MCF 10A (cell line): ENCODE measurements at regions of chr5 and their contacts with region 1.

Region 1: GRCh38 chr5:178204182-178204894 is at the start of gene HNRNPAB:
- DNase-seq: peak; percentile 98
- H3K4me3 Mint-ChIP-seq: peak within 1 kb of the TSS; percentile 99
- H3K27ac Mint-ChIP-seq: peak within 1 kb of the TSS; percentile 99
- H3K4me1 Mint-ChIP-seq: peaks cover 50% of the 10 kb centered on the region
- H3K27me3 Mint-ChIP-seq: no peaks in the 10 kb centered on the region
- CTCF ChIP-seq: no peak
- total RNA-seq, gene HNRNPAB: 313 and 364 TPM in 2 replicates

Region 2: GRCh38 chr5:178146020-178146820 is 58.1 kb before region 1 on chr5:
- CTCF ChIA-PET with region 1: no interaction called
- POLR2A ChIA-PET with region 1: interaction called, 10 read pairs
- intact Hi-C with region 1: no loop called
- DNase-seq: peak; percentile 85
- H3K4me3 Mint-ChIP-seq: no peak overlapping the region
- H3K27ac Mint-ChIP-seq: peak overlapping the region; percentile 37
- H3K4me1 Mint-ChIP-seq: peaks cover 24% of the 10 kb centered on the region
- H3K27me3 Mint-ChIP-seq: no peaks in the 10 kb centered on the region
- CTCF ChIP-seq: peak; percentile 93

Region 3: DNA sequence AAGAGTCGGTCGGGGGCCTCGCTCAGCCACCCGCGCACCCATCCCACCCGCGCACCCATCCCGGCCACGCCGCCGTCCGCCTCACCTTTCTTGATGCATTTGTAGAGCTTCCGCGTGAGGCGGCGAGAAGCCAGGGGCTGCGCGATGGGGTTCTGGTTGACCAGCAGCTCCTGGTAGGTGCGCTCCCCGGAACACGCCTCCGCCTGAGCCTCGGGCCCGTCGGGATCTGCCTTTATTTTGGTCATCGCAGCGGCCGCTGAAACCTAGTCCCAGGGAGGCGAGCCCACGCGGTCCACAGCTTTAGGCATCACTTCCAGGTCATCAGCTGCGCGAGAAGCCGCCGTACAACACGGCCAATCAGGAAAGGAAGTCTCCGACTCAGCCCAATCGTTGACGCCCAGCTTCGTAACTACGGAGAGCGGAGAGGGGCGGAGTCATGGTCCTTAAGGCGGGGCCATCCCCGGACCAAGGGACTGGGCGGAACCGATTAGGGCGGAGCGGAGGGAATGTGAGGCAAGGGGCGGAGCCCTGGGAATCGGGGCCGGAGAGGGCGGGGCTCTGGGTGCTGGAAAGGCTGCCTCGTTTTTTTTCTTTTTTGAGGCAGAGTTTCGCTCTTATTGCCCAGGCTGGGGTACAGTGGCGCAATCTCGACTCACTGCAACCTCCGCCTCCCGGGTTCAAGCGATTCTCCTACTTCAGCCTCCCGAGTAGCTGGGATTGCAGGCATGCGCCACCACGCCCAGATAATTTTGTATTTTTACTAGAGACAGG is 50.6 kb before region 1 on chr5 and contains the start of gene NHP2:
- CTCF ChIA-PET with region 1: interaction called, 5 read pairs
- POLR2A ChIA-PET with region 1: interaction called, 14 read pairs
- intact Hi-C with region 1: no loop called
- DNase-seq: peak; percentile 100
- H3K4me3 Mint-ChIP-seq: peak within 1 kb of the TSS; percentile 98
- H3K27ac Mint-ChIP-seq: peak within 1 kb of the TSS; percentile 8
- H3K4me1 Mint-ChIP-seq: peaks cover 11% of the 10 kb centered on the region
- H3K27me3 Mint-ChIP-seq: no peaks in the 10 kb centered on the region
- CTCF ChIP-seq: no peak
- total RNA-seq, gene NHP2: 322 and 327 TPM in 2 replicates

Region 4: DNA sequence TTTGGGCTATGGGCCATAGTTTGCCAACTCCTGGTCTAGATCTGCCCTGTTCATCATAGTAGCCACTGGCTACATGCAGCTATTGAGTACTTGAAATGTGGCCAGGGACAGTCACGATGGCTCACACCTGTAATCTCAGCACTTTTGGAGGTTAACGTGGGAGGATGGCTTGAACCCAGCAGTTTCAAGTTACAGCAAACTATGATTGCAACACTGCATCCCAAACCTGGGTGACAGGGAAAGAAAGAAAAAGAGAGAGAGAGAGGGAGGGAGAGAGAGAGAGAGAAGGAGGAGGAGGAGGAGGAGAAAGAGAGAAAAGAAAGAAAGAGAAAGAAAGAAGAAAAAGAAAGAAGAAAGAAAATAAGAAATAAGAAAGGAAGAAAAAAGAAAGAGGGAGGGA is 12.1 kb before region 1 on chr5:
- CTCF ChIA-PET with region 1: interaction called, 5 read pairs
- POLR2A ChIA-PET with region 1: interaction called, 44 read pairs
- intact Hi-C with region 1: no loop called
- DNase-seq: peak; percentile 98
- H3K4me3 Mint-ChIP-seq: no peak overlapping the region
- H3K27ac Mint-ChIP-seq: no peak overlapping the region
- H3K4me1 Mint-ChIP-seq: peaks cover 12% of the 10 kb centered on the region
- H3K27me3 Mint-ChIP-seq: peaks cover 23% of the 10 kb centered on the region
- CTCF ChIP-seq: no peak

Region 5: DNA sequence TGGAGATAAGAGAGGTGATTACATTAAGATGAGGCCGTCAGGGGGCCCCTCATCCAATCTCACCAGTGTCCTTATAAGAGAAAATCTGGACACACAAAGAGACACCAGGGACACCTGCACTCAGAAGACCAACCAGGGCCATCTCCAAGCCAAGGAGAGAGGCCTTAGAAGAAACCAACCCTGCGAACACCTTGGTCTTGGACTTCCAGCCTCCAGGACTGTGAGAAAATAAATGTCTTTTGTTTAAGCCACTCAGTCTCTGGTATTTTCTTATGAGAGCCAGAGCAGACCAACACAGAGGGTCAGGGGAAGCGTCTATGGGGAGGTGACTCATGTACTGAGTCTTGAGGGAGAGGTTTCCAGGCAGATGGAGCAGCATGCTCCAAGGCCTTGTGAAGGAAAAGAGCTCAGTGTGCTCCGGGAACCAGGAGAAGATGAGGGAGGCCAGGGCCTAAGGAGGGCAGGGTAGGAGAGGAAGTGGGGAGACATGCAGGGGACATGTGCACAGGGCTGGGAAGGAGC is 22.9 kb after region 1 on chr5:
- CTCF ChIA-PET with region 1: interaction called, 5 read pairs
- POLR2A ChIA-PET with region 1: interaction called, 32 read pairs
- intact Hi-C with region 1: loop called (anchors 2 kb)
- DNase-seq: no peak
- H3K4me3 Mint-ChIP-seq: no peak overlapping the region
- H3K27ac Mint-ChIP-seq: peak overlapping the region; percentile 55
- H3K4me1 Mint-ChIP-seq: peaks cover 54% of the 10 kb centered on the region
- H3K27me3 Mint-ChIP-seq: no peaks in the 10 kb centered on the region
- CTCF ChIP-seq: no peak